CD4-positive, alpha-beta T cell (primary cell): ENCODE measurements at regions of chr15 and their contacts with region 1.

Region 1: DNA sequence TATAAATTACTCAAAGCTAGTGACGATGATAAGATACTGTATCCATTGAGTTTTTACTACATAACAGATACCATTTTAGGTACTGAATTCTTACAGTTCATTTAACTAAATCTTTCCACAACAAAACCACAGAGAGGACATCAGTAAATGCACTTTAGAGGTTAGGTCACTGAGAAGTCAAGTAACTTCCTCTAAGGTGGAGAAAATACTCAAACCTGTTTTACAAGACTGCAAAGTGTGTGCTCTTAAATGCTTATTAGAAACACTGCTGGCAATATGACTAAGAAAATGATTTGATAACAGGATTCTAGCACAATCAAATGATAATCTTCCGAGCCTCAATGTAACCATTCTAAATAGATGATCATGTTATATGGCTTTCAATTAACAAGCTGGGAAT is 99.4 kb downstream of the UBE3A start:
- DNase-seq: no peak
- ATAC-seq: no peak
- H3K4me3 ChIP-seq: no peak overlapping the region
- H3K4me3 Mint-ChIP-seq: no peak overlapping the region
- H3K27ac ChIP-seq: no peak overlapping the region
- H3K27ac Mint-ChIP-seq: no peak overlapping the region
- H3K4me1 ChIP-seq: no peaks in the 10 kb centered on the region
- H3K4me1 Mint-ChIP-seq: peaks cover 3% of the 10 kb centered on the region
- H3K27me3 ChIP-seq: no peaks in the 10 kb centered on the region
- H3K27me3 Mint-ChIP-seq: no peaks in the 10 kb centered on the region
- CTCF ChIP-seq: no peak

Region 2: DNA sequence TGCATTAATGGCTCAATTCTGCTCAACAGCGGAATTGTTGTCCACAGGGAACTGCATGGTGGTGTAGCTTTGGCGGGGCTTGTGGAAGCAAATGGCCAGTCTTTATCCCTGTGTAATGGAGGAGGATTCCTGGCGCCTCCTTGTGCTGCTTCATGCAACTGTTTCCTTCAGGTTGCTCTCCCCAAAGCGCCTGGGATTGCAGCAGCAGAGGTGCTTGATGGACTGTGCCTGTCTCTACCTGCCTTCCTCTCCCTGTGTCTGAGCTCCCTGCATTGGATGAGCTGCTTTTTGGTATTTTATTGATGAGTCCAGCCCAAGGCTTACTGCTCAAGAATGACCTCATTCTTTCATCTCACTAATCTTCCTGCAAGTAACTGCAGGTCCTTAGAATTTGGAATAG is 1579.4 kb before region 1 on chr15:
- CTCF ChIA-PET with region 1: no interaction called
- POLR2A ChIA-PET with region 1: no interaction called
- intact Hi-C with region 1: no loop called
- DNase-seq: no peak
- ATAC-seq: no peak
- H3K4me3 ChIP-seq: no peak overlapping the region
- H3K4me3 Mint-ChIP-seq: no peak overlapping the region
- H3K27ac ChIP-seq: no peak overlapping the region
- H3K27ac Mint-ChIP-seq: no peak overlapping the region
- H3K4me1 ChIP-seq: no peaks in the 10 kb centered on the region
- H3K4me1 Mint-ChIP-seq: no peaks in the 10 kb centered on the region
- H3K27me3 ChIP-seq: no peaks in the 10 kb centered on the region
- H3K27me3 Mint-ChIP-seq: no peaks in the 10 kb centered on the region
- CTCF ChIP-seq: no peak

Region 3: GRCh38 chr15:23924688-23925087 is 1414.7 kb before region 1 on chr15:
- CTCF ChIA-PET with region 1: no interaction called
- POLR2A ChIA-PET with region 1: no interaction called
- intact Hi-C with region 1: no loop called
- DNase-seq: no peak
- ATAC-seq: no peak
- H3K4me3 ChIP-seq: no peak overlapping the region
- H3K4me3 Mint-ChIP-seq: no peak overlapping the region
- H3K27ac ChIP-seq: no peak overlapping the region
- H3K27ac Mint-ChIP-seq: no peak overlapping the region
- H3K4me1 ChIP-seq: no peaks in the 10 kb centered on the region
- H3K4me1 Mint-ChIP-seq: no peaks in the 10 kb centered on the region
- H3K27me3 ChIP-seq: no peaks in the 10 kb centered on the region
- H3K27me3 Mint-ChIP-seq: no peaks in the 10 kb centered on the region
- CTCF ChIP-seq: no peak

Region 4: GRCh38 chr15:25385986-25386385 is 46.6 kb after region 1 on chr15:
- CTCF ChIA-PET with region 1: no interaction called
- POLR2A ChIA-PET with region 1: no interaction called
- intact Hi-C with region 1: loop called in 1 of 2 experiments (anchors 5 kb)
- DNase-seq: no peak
- ATAC-seq: no peak
- H3K4me3 ChIP-seq: no peak overlapping the region
- H3K4me3 Mint-ChIP-seq: no peak overlapping the region
- H3K27ac ChIP-seq: no peak overlapping the region
- H3K27ac Mint-ChIP-seq: no peak overlapping the region
- H3K4me1 ChIP-seq: no peaks in the 10 kb centered on the region
- H3K4me1 Mint-ChIP-seq: peaks cover 62% of the 10 kb centered on the region
- H3K27me3 ChIP-seq: no peaks in the 10 kb centered on the region
- H3K27me3 Mint-ChIP-seq: no peaks in the 10 kb centered on the region
- CTCF ChIP-seq: no peak